Lower lobe of right lung (tissue), 2 donors: ENCODE measurements at regions of chr19 and their contacts with region 1.

Region 1: GRCh38 chr19:11203194-11204075 is 6.1 kb upstream of the KANK2 start:
- DNase-seq: peak; percentile 75
- ATAC-seq: peak; percentile 75 to 82
- H3K4me3 ChIP-seq: no peak overlapping the region
- H3K27ac ChIP-seq: peak overlapping the region; percentile 76
- H3K4me1 ChIP-seq: peaks cover 27% of the 10 kb centered on the region
- H3K27me3 ChIP-seq: no peaks in the 10 kb centered on the region
- CTCF ChIP-seq: peak; percentile 82

Region 2: DNA sequence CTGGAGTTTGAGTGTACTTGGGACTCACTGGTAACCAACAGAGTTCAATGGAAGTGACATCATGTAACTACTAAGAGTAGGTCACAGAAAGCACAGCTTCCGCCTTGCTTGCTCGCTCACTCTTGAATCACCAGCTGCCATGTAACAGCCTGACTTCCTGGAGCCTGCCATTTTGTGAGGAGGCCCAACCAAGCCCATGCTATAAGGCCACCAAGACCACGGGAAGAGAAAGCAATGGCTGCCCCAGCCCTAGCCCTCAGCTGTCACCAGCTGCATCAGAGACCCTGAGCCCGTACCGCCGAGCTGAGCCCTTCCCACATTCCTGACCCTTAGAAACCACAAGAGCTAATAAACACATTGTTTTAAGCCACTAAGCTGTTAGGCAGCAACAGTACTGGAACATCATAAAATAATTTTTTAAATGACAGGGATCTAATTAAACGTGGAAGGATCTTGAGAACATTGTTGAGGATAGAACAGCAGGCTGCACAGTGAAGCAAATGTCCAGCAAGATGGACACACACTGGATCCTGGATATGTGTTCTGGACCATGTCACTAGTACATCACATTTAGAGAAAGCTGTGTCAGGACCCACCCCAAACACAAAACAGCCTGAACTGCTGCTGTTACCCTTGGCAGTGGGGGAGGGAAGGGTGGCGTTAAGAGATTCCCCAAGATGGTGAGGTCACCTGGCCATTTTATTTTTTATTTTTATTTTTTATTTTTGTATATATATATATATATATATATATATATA is 135.9 kb before region 1 on chr19:
- intact Hi-C with region 1: no loop called
- DNase-seq: no peak
- ATAC-seq: no peak
- H3K4me3 ChIP-seq: no peak overlapping the region
- H3K27ac ChIP-seq: no peak overlapping the region
- H3K4me1 ChIP-seq: no peaks in the 10 kb centered on the region
- H3K27me3 ChIP-seq: no peaks in the 10 kb centered on the region
- CTCF ChIP-seq: no peak

Region 3: DNA sequence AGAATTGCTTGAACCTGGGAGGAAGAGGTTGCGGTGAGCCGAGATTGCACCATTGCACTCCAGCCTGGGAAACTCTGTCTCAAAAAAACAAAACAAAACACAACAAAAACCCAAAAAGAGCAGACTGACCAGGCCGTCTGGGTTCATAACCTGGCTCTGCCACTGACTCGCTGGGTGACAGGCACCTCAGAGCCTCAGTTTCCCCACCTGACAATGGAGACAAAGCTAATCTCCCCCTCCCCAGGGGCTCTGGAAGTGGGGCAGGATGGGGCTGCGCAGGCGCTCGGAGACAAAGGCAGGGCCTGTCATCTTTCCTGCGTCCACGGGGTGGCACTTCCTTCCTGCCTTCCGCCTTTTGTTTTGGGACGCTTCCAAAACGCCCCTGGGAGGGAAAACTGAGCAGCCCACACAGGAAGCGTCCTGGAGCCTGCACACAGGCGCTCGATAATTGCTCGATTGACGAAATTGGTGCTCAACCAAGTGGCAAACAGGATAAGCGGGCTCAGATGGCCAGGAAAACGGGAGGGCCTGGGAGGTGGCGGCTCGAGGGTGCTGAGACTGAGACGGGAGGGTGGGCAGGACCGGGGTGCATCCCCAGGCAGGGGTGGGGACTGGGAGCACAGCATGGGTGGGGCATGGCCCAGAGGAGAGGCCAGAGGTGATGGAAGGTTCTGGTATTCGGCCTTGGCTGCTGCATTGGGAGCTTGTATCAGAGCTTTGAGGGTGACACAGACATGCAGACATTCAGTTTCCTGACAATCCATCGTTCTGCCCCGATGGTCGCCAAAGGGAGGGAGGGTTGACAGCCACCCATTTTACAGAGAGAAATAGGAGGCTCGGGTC is 65.7 kb before region 1 on chr19:
- intact Hi-C with region 1: loop called (anchors 5 kb)
- DNase-seq: peak; percentile 80
- ATAC-seq: peak; percentile 53 to 68
- H3K4me3 ChIP-seq: peak overlapping the region; percentile 42
- H3K27ac ChIP-seq: peak overlapping the region; percentile 77
- H3K4me1 ChIP-seq: peaks cover 49% of the 10 kb centered on the region
- H3K27me3 ChIP-seq: no peaks in the 10 kb centered on the region
- CTCF ChIP-seq: peak; percentile 77